Mammary epithelial cell (primary cell): ENCODE measurements at regions of chr17 and their contacts with region 1.

Region 1: GRCh38 chr17:49694847-49695683 is 12.7 kb downstream of the SLC35B1 start:
- DNase-seq: no peak
- H3K4me3 ChIP-seq: no peak overlapping the region
- H3K27ac ChIP-seq: no peak overlapping the region
- H3K4me1 ChIP-seq: no peaks in the 10 kb centered on the region
- H3K27me3 ChIP-seq: no peaks in the 10 kb centered on the region
- CTCF ChIP-seq: peak; percentile 85 to 92

Region 2: GRCh38 chr17:49575579-49576087 is 119.4 kb before region 1 on chr17 and contains the start of gene NXPH3:
- CTCF ChIA-PET with region 1: interaction called, 7 read pairs
- dilution Hi-C with region 1: no loop called
- in situ Hi-C with region 1: loop called in 1 of 2 experiments (anchors 5 kb)
- intact Hi-C with region 1: loop called (anchors 1 kb)
- DNase-seq: peak; percentile 59
- H3K4me3 ChIP-seq: peak within 1 kb of the TSS; percentile 58 to 60 (median 59)
- H3K27ac ChIP-seq: no peak within 1 kb of the TSS
- H3K4me1 ChIP-seq: peaks cover 11% of the 10 kb centered on the region
- H3K27me3 ChIP-seq: no peaks in the 10 kb centered on the region
- CTCF ChIP-seq: peak; percentile 40 to 45
- total RNA-seq, gene NXPH3: 0.33 to 0.35 TPM

Region 3: GRCh38 chr17:49597928-49598655 is 97.0 kb before region 1 on chr17:
- CTCF ChIA-PET with region 1: interaction called, 3 read pairs
- dilution Hi-C with region 1: loop called (anchors 5 kb)
- in situ Hi-C with region 1: no loop called
- intact Hi-C with region 1: no loop called
- DNase-seq: no peak
- H3K4me3 ChIP-seq: no peak overlapping the region
- H3K27ac ChIP-seq: no peak overlapping the region
- H3K4me1 ChIP-seq: peaks cover 5% of the 10 kb centered on the region
- H3K27me3 ChIP-seq: no peaks in the 10 kb centered on the region
- CTCF ChIP-seq: no peak

Region 4: GRCh38 chr17:49646391-49647255 is 48.4 kb before region 1 on chr17:
- CTCF ChIA-PET with region 1: no interaction called
- dilution Hi-C with region 1: no loop called
- in situ Hi-C with region 1: no loop called
- intact Hi-C with region 1: loop called (anchors 1 kb)
- DNase-seq: peak; percentile 85
- H3K4me3 ChIP-seq: peak overlapping the region; percentile 26 to 39 (median 37)
- H3K27ac ChIP-seq: peak overlapping the region; percentile 62
- H3K4me1 ChIP-seq: peaks cover 32% of the 10 kb centered on the region
- H3K27me3 ChIP-seq: no peaks in the 10 kb centered on the region
- CTCF ChIP-seq: no peak